Right ventricle myocardium inferior (tissue), 1 donor: ENCODE measurements at regions of chr2 and their contacts with region 1.

Region 1: DNA sequence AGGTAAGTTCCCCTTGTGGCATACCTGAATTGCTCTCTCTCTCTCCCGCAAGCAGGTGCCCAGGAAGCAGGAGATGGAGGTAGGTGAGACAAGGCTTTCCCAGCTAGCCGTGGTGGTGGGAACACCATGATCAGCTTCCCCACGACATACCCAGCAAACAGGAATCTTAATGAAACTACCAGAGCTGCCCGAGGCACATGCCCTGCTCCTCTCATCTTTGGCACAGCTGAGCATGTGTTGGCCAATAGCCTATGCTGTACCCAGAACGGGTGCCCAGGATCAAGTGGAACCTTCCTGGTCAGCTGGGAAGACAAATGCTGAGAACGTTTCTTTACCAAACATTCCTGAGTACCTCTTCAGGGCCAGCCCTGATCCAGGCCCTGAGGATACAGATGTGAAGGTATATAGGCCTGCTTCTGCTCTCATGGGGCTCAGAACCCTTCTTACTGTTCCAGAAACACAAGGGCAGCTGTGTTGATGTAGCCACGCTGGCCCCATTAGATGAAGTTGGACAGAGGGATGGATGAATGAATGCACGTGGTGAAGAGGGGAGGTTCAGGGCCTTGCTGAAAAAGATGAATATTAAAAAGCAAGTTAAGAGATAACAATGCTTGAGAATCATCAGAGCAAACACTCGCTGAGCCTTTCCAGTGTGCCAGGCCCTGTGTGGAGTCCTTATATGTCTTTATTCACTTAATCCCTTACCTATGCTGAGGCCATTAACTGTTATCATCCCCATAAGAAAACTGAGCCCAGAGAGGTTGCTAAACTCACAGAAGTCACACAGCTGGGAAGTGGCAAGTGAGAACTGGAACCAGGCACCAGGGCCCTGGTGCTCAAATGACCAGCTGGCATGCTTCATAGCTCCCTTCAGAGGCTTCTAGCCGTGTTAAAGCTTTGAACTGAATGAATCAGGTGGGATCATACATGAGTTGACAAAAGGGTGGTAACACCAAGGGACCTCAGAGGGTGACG is 68.8 kb upstream of the TMEM247 start:
- DNase-seq: no peak
- ATAC-seq: peak; percentile 51

Region 2: GRCh38 chr2:46451131-46451711 is 40.7 kb after region 1 on chr2:
- intact Hi-C with region 1: loop called (anchors 5 kb)
- DNase-seq: no peak
- ATAC-seq: no peak

Region 3: DNA sequence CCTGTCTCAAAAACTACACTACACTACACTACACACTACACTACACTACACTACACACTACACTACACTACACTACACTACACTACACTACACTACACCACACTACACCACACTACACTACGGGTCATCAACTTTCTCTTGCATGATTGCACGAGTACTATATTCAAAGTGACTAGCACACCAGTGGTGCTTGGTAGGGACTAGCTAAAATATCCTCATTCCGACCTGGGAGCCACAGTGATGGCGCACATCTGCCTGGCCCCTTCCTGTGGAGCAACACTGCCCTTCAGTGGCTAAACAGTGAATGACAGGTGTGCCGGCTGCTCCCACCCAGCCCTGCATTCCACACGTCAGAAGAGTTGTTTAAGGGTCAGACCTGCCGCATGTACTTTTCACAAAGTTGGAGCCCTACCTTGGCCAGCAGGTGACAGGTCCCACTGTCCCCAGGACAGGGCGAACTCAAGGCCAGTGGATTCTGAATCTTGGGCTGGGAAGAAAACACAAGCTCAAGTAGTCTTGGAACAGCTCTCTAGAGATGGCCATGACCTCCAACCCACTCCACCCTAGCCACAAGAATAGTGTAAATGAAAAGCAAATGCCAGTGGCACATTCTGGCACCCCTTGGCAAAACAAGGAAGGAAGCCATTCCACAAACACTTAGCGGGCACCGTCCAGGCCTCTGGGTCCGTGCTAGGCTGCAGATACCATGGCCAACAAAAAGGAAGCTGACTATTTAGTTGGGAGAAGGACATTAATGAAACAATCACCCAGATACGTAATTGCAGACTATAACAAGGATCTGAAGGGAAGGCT is 912.7 kb after region 1 on chr2:
- intact Hi-C with region 1: no loop called
- DNase-seq: peak; percentile 87
- ATAC-seq: peak; percentile 94